ENCODE measurements at regions of chr6 and their contacts with region 1.

Region 1: GRCh38 chr6:110039364-110039980 is 61.4 kb downstream of the GPR6 start:
- DNase-seq: peak; percentile 66 to 85 (median 68)
- ATAC-seq: peak; percentile 96
- H3K4me3 ChIP-seq: no peak overlapping the region
- H3K27ac ChIP-seq: no peak overlapping the region
- H3K4me1 ChIP-seq: no peaks in the 10 kb centered on the region
- H3K27me3 ChIP-seq: peaks cover 4 to 23% of the 10 kb centered on the region in 2 experiments; a peak in 3 of 5 replicates
- CTCF ChIP-seq: peak; percentile 90 to 94 (median 90)
- EP300 ChIP-seq: no peak
- POLR2A ChIP-seq: no peak
- RAD21 ChIP-seq: peak; percentile 95 to 97

Region 2: GRCh38 chr6:109252261-109253041 is 787.0 kb before region 1 on chr6:
- CTCF ChIA-PET with region 1: no interaction called
- POLR2A ChIA-PET with region 1: no interaction called
- in situ Hi-C with region 1: no loop called
- intact Hi-C with region 1: no loop called
- DNase-seq: no peak
- ATAC-seq: no peak
- H3K4me3 ChIP-seq: no peak overlapping the region
- H3K27ac ChIP-seq: no peak overlapping the region
- H3K4me1 ChIP-seq: 0 out of 5 replicates have a peak, but pooled peaks cover under 1 to 3% of the 10 kb centered on the region in 2 experiments
- H3K27me3 ChIP-seq: no peaks in the 10 kb centered on the region
- CTCF ChIP-seq: no peak
- EP300 ChIP-seq: no peak
- POLR2A ChIP-seq: no peak
- RAD21 ChIP-seq: no peak

Region 3: GRCh38 chr6:109783250-109783986 is 256.1 kb before region 1 on chr6:
- CTCF ChIA-PET with region 1: no interaction called
- POLR2A ChIA-PET with region 1: no interaction called
- in situ Hi-C with region 1: no loop called
- intact Hi-C with region 1: loop called (anchors 2 kb)
- DNase-seq: peak; percentile 14 to 52 (median 24)
- ATAC-seq: peak; percentile 86
- H3K4me3 ChIP-seq: no peak overlapping the region
- H3K27ac ChIP-seq: no peak overlapping the region
- H3K4me1 ChIP-seq: no peaks in the 10 kb centered on the region
- H3K27me3 ChIP-seq: no peaks in the 10 kb centered on the region; a peak in 1 of 5 replicates
- CTCF ChIP-seq: peak; percentile 65 to 80 (median 67)
- EP300 ChIP-seq: no peak
- POLR2A ChIP-seq: no peak
- RAD21 ChIP-seq: peak; percentile 88 to 91

Region 4: DNA sequence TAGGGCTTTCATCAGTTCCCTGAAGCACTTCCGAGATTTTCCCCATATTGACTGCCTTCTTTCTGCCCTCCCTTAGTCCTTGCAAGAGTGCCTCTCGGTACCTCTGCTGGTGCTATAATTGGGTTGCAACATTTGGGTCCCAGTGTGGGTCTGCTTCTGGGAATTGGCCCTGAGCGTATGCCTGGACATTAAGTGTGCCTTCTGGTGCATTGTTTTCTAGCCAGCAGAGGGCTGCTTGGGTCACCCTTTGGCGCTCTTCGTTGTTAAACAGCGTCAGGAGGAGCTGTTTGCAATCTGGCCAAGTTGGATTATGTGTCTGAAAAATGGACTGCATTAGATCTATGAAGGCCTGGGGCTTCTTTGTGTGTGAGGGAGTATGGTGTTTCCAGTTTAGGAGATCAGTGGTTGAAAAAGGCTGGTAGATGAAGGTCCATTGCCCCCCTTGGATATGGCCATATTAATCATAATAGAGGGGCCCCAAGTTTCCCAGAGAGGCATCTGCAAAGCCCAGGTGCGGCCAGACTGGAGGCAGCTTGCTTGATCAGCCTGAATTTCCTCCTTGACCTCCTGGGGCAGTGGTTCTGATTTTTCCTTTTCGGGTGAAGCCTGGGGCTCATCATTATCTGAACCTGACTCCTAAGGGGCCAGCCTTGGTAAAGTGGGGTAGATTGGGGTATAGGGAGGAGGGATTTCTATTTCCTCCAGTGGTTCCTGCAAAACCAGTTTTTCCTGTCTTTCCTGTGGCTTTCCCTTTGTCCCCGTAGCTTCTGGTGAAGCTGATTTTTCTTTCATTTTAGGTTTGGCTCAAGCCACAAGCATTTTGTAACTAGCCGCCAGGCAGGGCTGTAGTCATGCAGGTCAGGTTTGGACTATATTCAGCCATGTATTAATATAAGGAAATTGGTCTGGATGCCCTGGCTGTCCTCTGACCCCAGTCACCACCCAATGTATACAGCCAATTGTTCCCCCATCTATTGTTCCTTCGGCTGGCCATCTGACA is 146.7 kb before region 1 on chr6:
- CTCF ChIA-PET with region 1: interaction called, 3 read pairs
- POLR2A ChIA-PET with region 1: no interaction called
- in situ Hi-C with region 1: no loop called
- intact Hi-C with region 1: loop called (anchors 10 kb)
- DNase-seq: no peak
- ATAC-seq: no peak
- H3K4me3 ChIP-seq: no peak overlapping the region
- H3K27ac ChIP-seq: no peak overlapping the region
- H3K4me1 ChIP-seq: no peaks in the 10 kb centered on the region
- H3K27me3 ChIP-seq: peaks cover 8 to 57% of the 10 kb centered on the region in 2 experiments; a peak in 4 of 5 replicates
- CTCF ChIP-seq: peak in 1 of 3 experiments; percentile 21; a peak in 2 of 6 replicates
- EP300 ChIP-seq: no peak
- POLR2A ChIP-seq: no peak
- RAD21 ChIP-seq: peak; percentile 30 to 43; a peak in 2 of 4 replicates

Region 5: GRCh38 chr6:109991201-109992101 is 48.0 kb before region 1 on chr6:
- CTCF ChIA-PET with region 1: no interaction called
- POLR2A ChIA-PET with region 1: no interaction called
- in situ Hi-C with region 1: no loop called
- intact Hi-C with region 1: no loop called
- DNase-seq: no peak
- ATAC-seq: no peak
- H3K4me3 ChIP-seq: no peak overlapping the region
- H3K27ac ChIP-seq: no peak overlapping the region
- H3K4me1 ChIP-seq: no peaks in the 10 kb centered on the region
- H3K27me3 ChIP-seq: no peaks in the 10 kb centered on the region
- CTCF ChIP-seq: no peak
- EP300 ChIP-seq: no peak
- POLR2A ChIP-seq: no peak
- RAD21 ChIP-seq: no peak

Region 6: GRCh38 chr6:110389689-110390382 is 350.4 kb after region 1 on chr6:
- CTCF ChIA-PET with region 1: interaction called, 4 read pairs
- POLR2A ChIA-PET with region 1: no interaction called
- in situ Hi-C with region 1: loop called (anchors 10 kb)
- intact Hi-C with region 1: loop called (anchors 5 kb)
- DNase-seq: peak in 1 of 4 experiments; percentile 23
- ATAC-seq: peak; percentile 42; the same call in 1 of the 3 replicates
- H3K4me3 ChIP-seq: no peak overlapping the region
- H3K27ac ChIP-seq: no peak overlapping the region
- H3K4me1 ChIP-seq: peaks cover 0 to 3% of the 10 kb centered on the region in 2 experiments; a peak in 2 of 5 replicates
- H3K27me3 ChIP-seq: peaks cover 0 to 12% of the 10 kb centered on the region in 2 experiments; a peak in 2 of 5 replicates
- CTCF ChIP-seq: no peak
- EP300 ChIP-seq: no peak; the same call in 1 of the 2 replicates
- POLR2A ChIP-seq: no peak
- RAD21 ChIP-seq: no peak

Region 7: DNA sequence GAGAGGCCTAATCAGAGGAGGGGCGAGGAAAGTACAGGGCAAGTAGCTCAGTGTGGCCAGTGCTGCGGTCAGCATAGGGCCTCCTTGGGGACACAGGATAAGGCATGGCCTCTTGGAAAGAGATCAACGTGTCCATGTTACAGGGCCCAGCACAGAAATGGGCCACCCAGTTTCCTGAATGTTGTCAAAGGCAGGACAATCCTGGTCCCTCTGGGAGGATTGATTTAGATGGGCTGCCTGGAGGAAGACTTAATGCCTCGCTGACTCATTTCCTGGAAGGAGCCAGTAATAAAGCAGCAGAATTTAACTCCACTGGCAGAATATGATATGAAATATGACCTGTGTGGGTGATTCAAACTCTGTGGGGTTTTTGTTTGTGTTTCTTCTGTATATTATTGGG is 359.3 kb after region 1 on chr6:
- CTCF ChIA-PET with region 1: no interaction called
- POLR2A ChIA-PET with region 1: no interaction called
- in situ Hi-C with region 1: loop called (anchors 10 kb)
- intact Hi-C with region 1: loop called (anchors 5 kb)
- DNase-seq: peak in 2 of 4 experiments; percentile 14 to 30
- ATAC-seq: peak; percentile 74
- H3K4me3 ChIP-seq: no peak overlapping the region
- H3K27ac ChIP-seq: no peak overlapping the region
- H3K4me1 ChIP-seq: peaks cover 9 to 11% of the 10 kb centered on the region in 2 experiments; a peak in 3 of 5 replicates
- H3K27me3 ChIP-seq: peaks cover 0 to 14% of the 10 kb centered on the region in 2 experiments; a peak in 3 of 5 replicates
- CTCF ChIP-seq: no peak
- EP300 ChIP-seq: no peak
- POLR2A ChIP-seq: no peak
- RAD21 ChIP-seq: no peak

Measured in K562 (cell line).